ENCODE measurements at regions of chr6 and their contacts with region 1.

Region 1: GRCh38 chr6:154928325-154928922 is 66.7 kb upstream of the TIAM2 start:
- DNase-seq: peak; percentile 69
- ATAC-seq: peak; percentile 77
- H3K4me3 ChIP-seq: no peak overlapping the region
- H3K27ac ChIP-seq: no peak overlapping the region
- H3K4me1 ChIP-seq: peaks cover 16% of the 10 kb centered on the region
- H3K27me3 ChIP-seq: no peaks in the 10 kb centered on the region
- CTCF ChIP-seq: peak; percentile 88
- POLR2A ChIP-seq: 0 out of 2 replicates have a peak, but pooled peaks have one; percentile 34
- RAD21 ChIP-seq: peak; percentile 97

Region 2: DNA sequence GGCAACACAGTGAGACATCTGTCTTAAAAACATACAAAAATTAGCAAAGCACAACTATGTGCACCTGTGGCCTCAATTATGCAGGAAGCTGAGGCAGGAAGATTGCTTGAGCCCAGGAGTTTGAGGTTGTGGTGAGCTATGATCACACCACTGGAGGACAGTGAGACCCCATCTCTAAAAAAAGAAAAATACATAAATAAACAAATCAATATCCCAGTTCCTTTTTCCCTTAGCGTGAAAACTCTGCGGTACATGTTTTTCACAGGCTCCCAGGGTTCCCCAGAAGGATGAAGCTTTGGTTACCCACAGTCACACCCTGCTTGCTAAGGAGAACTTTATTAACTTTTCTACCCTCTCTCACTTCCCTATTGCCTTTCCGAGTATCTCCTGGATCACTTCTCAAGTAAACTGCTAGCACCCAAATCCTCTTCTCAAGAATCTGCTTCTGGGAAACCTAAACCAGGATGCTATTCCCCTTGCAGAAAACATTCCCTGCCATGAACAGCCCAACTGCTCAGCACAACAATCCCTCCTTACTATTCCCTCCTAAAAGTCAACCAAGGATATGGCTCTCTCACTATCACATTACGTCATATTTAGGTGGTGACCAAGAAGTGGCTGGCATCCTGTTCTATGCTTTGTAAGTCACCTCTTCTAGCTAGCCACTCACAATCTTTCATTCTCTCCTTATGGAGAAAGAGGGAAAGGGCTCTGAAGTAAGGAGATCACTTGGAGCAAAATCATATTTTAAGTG is 694.2 kb before region 1 on chr6:
- CTCF ChIA-PET with region 1: no interaction called
- POLR2A ChIA-PET with region 1: no interaction called
- dilution Hi-C with region 1: no loop called
- in situ Hi-C with region 1: no loop called
- intact Hi-C with region 1: no loop called
- DNase-seq: no peak
- ATAC-seq: no peak
- H3K4me3 ChIP-seq: no peak overlapping the region
- H3K27ac ChIP-seq: no peak overlapping the region
- H3K4me1 ChIP-seq: peaks cover 5% of the 10 kb centered on the region; the same call in 1 of the 2 replicates
- H3K27me3 ChIP-seq: no peaks in the 10 kb centered on the region
- CTCF ChIP-seq: no peak
- POLR2A ChIP-seq: no peak
- RAD21 ChIP-seq: no peak

Region 3: GRCh38 chr6:154868143-154868594 is 60.3 kb before region 1 on chr6:
- CTCF ChIA-PET with region 1: interaction called, 6 read pairs
- POLR2A ChIA-PET with region 1: no interaction called
- dilution Hi-C with region 1: no loop called
- in situ Hi-C with region 1: no loop called
- intact Hi-C with region 1: loop called (anchors 1 kb)
- DNase-seq: peak; percentile 76
- ATAC-seq: peak; percentile 83
- H3K4me3 ChIP-seq: no peak overlapping the region
- H3K27ac ChIP-seq: no peak overlapping the region
- H3K4me1 ChIP-seq: no peaks in the 10 kb centered on the region
- H3K27me3 ChIP-seq: no peaks in the 10 kb centered on the region
- CTCF ChIP-seq: peak; percentile 86
- POLR2A ChIP-seq: no peak
- RAD21 ChIP-seq: peak; percentile 84

Region 4: DNA sequence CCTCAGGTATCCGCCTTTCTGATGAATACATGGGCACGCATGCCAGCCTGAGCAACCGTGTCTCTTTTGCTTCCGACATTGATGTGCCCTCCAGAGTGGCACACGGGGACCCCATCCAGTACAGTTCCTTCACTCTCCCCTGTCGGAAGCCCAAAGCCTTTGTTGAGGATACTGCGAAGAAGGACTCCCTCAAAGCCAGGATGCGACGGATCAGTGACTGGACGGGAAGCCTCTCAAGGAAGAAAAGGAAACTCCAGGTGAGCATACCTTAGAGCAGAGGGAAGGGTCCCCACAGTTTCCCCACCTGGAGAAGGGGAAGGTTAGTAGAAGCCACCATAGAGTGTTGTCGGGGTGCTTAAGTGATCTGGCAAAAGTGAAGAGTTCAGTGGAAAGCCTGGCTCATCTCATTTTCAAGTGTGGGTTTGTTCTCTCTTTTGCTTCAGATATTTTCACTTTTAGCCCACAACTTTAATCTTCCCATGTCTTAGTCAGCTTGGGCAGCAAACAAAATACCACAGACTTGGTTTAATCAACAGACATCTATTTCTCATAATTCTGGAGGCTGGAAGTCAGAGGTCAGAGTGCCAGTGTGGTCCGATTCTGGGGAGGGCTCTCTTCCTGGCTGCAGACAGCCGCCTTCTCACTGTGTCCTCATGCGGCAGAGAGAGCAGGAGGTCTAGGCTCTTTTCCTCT is 201.9 kb after region 1 on chr6:
- CTCF ChIA-PET with region 1: interaction called, 13 read pairs
- POLR2A ChIA-PET with region 1: no interaction called
- dilution Hi-C with region 1: no loop called
- in situ Hi-C with region 1: no loop called
- intact Hi-C with region 1: no loop called
- DNase-seq: no peak
- ATAC-seq: peak; percentile 5; the same call in 1 of the 2 replicates
- H3K4me3 ChIP-seq: no peak overlapping the region
- H3K27ac ChIP-seq: no peak overlapping the region
- H3K4me1 ChIP-seq: peaks cover 19% of the 10 kb centered on the region
- H3K27me3 ChIP-seq: no peaks in the 10 kb centered on the region
- CTCF ChIP-seq: no peak
- POLR2A ChIP-seq: no peak
- RAD21 ChIP-seq: no peak

Region 5: GRCh38 chr6:155253337-155253736 is 324.9 kb after region 1 on chr6:
- CTCF ChIA-PET with region 1: interaction called, 3 read pairs
- POLR2A ChIA-PET with region 1: no interaction called
- dilution Hi-C with region 1: no loop called
- in situ Hi-C with region 1: loop called (anchors 5 kb)
- intact Hi-C with region 1: loop called (anchors 1 kb)
- DNase-seq: no peak
- ATAC-seq: no peak
- H3K4me3 ChIP-seq: no peak overlapping the region
- H3K27ac ChIP-seq: no peak overlapping the region
- H3K4me1 ChIP-seq: peaks cover 10% of the 10 kb centered on the region
- H3K27me3 ChIP-seq: no peaks in the 10 kb centered on the region
- CTCF ChIP-seq: no peak
- POLR2A ChIP-seq: no peak
- RAD21 ChIP-seq: no peak

Measured in IMR-90 (cell line).